BJ (cell line): ENCODE measurements at regions of chr7 and their contacts with region 1.

Region 1: GRCh38 chr7:75601539-75601938 is 109.4 kb downstream of the SPDYE5 start:
- DNase-seq: no peak
- H3K4me3 ChIP-seq: no peak overlapping the region
- H3K27me3 ChIP-seq: no peaks in the 10 kb centered on the region
- CTCF ChIP-seq: no peak

Region 2: GRCh38 chr7:75546237-75547015 is 55.1 kb before region 1 on chr7:
- CTCF ChIA-PET with region 1: no interaction called
- POLR2A ChIA-PET with region 1: no interaction called
- DNase-seq: no peak
- H3K4me3 ChIP-seq: no peak overlapping the region
- H3K27me3 ChIP-seq: no peaks in the 10 kb centered on the region
- CTCF ChIP-seq: no peak

Region 3: DNA sequence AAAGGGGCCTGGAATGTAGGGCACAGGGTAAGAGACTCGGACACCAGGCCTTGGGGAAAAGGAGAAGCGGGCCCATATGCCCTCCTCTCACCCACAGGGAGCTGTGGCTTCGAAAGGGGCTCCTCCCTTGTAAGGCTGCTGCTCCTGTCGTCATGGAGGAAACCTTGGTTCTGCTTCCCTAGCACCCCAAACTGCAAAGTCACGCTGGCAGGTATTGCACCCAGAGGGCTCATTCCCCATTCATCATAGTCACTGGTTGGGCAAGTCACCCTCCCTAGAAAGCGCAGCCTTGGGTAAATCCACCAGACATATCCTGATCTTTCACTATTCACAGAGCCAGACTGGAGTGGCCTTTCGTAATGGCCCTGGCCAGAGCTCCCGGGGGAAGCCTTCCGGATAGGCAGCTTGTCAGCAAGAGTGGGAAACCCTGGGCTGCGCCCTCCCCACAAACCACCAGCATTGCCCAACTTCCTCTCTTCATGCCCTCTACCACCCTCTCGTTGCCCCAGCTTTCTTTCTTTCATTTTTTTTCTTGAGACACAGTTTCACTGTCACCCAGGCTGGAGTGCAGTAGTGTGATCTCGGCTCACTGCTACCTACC is 16.2 kb after region 1 on chr7:
- CTCF ChIA-PET with region 1: no interaction called
- POLR2A ChIA-PET with region 1: interaction called, 12 read pairs
- DNase-seq: no peak
- H3K4me3 ChIP-seq: no peak overlapping the region
- H3K27me3 ChIP-seq: no peaks in the 10 kb centered on the region
- CTCF ChIP-seq: no peak